Activated CD4-positive, alpha-beta memory T cell treated with anti-CD3 and anti-CD28 coated beads for 36 hours (primary cell): ENCODE measurements at regions of chr17 and their contacts with region 1.

Region 1: GRCh38 chr17:14152721-14153120 is 83.4 kb downstream of the COX10 start:
- DNase-seq: no peak
- H3K4me3 Mint-ChIP-seq: no peak overlapping the region
- H3K27ac Mint-ChIP-seq: no peak overlapping the region
- H3K4me1 Mint-ChIP-seq: peaks cover 35% of the 10 kb centered on the region
- H3K27me3 Mint-ChIP-seq: no peaks in the 10 kb centered on the region

Region 2: DNA sequence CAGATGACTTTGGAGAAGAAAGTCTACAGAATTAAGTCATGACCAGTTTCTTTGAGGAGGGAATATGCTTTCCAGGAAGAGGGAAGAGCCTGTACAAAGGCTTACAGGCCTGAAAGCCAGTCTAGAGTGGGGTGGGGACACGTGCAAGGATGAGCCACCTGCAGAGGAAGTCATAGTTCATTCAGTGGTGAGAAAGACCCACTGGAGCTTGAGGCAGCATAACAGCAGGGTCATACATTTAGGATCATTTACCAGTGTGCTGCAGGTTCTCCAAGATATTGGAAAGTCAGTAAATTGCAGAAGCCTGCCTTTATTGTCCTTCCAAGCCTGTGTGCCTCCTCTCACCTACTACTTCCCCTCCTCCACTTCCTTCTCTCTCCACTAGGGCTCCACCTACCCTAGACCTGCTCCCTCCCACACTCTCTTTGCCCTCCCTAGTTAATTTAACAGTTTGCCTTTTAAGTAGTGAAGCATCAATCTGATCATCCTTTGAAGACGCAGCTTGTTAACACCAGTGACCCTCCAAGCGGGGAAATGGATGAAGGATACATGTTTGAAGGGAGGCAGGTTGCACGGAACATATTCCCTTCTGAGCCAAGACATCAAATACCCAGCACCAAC is 43.8 kb after region 1 on chr17:
- CTCF ChIA-PET with region 1: no interaction called
- POLR2A ChIA-PET with region 1: no interaction called
- intact Hi-C with region 1: loop called (anchors 5 kb)
- DNase-seq: no peak
- H3K4me3 Mint-ChIP-seq: peak overlapping the region; percentile 34
- H3K27ac Mint-ChIP-seq: peak overlapping the region; percentile 85
- H3K4me1 Mint-ChIP-seq: peaks cover 83% of the 10 kb centered on the region
- H3K27me3 Mint-ChIP-seq: no peaks in the 10 kb centered on the region

Region 3: DNA sequence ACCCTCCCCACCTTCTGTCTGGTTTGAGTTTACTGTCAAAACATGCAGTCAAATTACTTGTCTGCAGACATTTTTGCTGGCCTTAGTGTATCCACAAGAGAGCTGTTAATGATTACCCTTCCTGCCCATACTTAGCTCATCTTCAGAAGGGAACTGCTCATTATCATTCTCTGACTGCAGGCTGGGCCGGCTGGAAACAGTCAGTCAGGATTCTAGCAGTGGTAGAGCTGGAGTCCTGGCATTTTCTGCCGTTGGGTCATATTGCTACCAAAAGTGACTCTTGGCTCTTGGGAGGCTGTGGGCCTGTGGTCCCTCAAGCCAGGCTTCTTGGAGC is 608.3 kb after region 1 on chr17:
- CTCF ChIA-PET with region 1: no interaction called
- POLR2A ChIA-PET with region 1: no interaction called
- intact Hi-C with region 1: no loop called
- DNase-seq: no peak
- H3K4me3 Mint-ChIP-seq: no peak overlapping the region
- H3K27ac Mint-ChIP-seq: no peak overlapping the region
- H3K4me1 Mint-ChIP-seq: no peaks in the 10 kb centered on the region
- H3K27me3 Mint-ChIP-seq: peaks cover 4% of the 10 kb centered on the region